ENCODE measurements at regions of chr18 and their contacts with region 1.

Region 1: GRCh38 chr18:864872-865273 is 39.8 kb upstream of the ADCYAP1 start:
- DNase-seq: peak; percentile 18 to 59 (median 46)
- ATAC-seq: peak; percentile 76
- H3K4me3 ChIP-seq: no peak overlapping the region
- H3K4me3 Mint-ChIP-seq: peak overlapping the region in 2 of 10 donors; percentile 11 to 23
- H3K27ac ChIP-seq: no peak overlapping the region
- H3K27ac Mint-ChIP-seq: no peak overlapping the region
- H3K4me1 ChIP-seq: no peaks in the 10 kb centered on the region
- H3K4me1 Mint-ChIP-seq: peaks cover 3 to 6% (median 4%) of the 10 kb centered on the region in 7 donors
- H3K27me3 ChIP-seq: peaks cover 0 to 5% of the 10 kb centered on the region in 2 donors
- H3K27me3 Mint-ChIP-seq: peaks cover 18 to 40% (median 20%) of the 10 kb centered on the region in 5 donors

Region 2: DNA sequence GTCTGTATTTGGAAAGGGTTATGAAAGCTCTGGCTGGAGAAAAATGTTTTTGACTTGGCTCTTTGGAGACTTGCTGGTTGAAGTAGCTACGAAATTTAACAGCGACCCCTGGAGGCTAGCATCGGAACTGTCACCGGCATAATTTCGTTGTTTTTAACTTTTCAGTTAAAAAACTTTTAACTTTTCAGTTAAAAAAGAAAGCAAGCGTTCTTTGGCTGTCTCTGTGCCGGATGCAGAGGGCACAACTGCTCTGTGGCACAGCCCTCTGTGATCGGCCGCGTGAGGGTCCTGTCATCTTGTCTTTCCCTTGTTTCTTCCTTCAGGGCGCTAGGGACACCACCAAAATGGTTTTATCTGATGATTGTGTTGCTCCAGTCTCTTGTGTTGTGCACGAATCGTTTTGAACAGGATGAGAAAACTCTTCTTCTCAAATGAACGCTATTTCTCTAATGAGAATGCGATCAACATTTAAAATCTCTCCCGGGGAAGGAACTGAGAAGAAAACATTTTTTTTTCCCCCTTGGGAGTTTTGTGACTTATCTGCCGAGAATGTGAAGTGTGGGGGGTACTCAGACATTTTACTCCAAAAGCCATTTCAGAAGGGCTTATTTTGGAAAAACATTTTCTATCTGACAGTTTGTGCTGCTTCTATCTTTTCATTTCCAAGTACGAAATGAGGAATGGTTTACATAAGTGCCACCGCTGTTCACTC is 96.9 kb after region 1 on chr18:
- CTCF ChIA-PET with region 1: interaction called, 5 read pairs
- POLR2A ChIA-PET with region 1: no interaction called
- intact Hi-C with region 1: loop called in 1 of 2 experiments (anchors 1 kb)
- DNase-seq: peak in 7 of 9 donors; percentile 11 to 50 (median 34)
- ATAC-seq: peak; percentile 27
- H3K4me3 ChIP-seq: peak overlapping the region; percentile 21
- H3K4me3 Mint-ChIP-seq: peak overlapping the region in 8 of 10 donors; percentile 3 to 63 (median 36)
- H3K27ac ChIP-seq: no peak overlapping the region
- H3K27ac Mint-ChIP-seq: no peak overlapping the region
- H3K4me1 ChIP-seq: peaks cover 0 to 3% of the 10 kb centered on the region in 2 donors
- H3K4me1 Mint-ChIP-seq: peaks cover 0 to 10% (median 6%) of the 10 kb centered on the region in 7 donors
- H3K27me3 ChIP-seq: no peaks in the 10 kb centered on the region
- H3K27me3 Mint-ChIP-seq: peaks cover 25 to 39% (median 29%) of the 10 kb centered on the region in 5 donors

Region 3: DNA sequence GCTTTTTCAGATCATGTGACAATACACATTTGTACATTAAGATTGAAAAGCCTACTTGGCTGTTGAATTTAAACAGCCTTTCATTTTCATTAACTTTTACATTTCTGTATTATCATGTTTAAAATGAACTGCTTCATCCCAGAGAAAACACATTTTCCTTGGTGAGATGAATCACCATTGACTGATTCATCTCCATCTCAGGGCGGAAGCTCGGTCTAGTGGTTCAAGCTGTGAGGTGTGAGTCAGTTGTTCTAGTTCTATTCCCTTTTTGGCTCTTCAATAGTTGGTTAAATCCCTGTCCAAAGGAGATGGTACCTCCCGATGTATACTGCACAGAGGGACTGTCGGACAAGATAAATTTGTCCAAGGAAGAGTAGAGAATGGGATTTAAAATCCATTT is 229.5 kb after region 1 on chr18:
- CTCF ChIA-PET with region 1: no interaction called
- POLR2A ChIA-PET with region 1: no interaction called
- intact Hi-C with region 1: no loop called
- DNase-seq: no peak
- ATAC-seq: no peak
- H3K4me3 ChIP-seq: no peak overlapping the region
- H3K4me3 Mint-ChIP-seq: no peak overlapping the region
- H3K27ac ChIP-seq: no peak overlapping the region
- H3K27ac Mint-ChIP-seq: no peak overlapping the region
- H3K4me1 ChIP-seq: no peaks in the 10 kb centered on the region
- H3K4me1 Mint-ChIP-seq: no peaks in the 10 kb centered on the region
- H3K27me3 ChIP-seq: no peaks in the 10 kb centered on the region
- H3K27me3 Mint-ChIP-seq: peaks cover 0 to 3% (median 0%) of the 10 kb centered on the region in 5 donors

Region 4: GRCh38 chr18:1585879-1586488 is 721.1 kb after region 1 on chr18:
- CTCF ChIA-PET with region 1: no interaction called
- POLR2A ChIA-PET with region 1: no interaction called
- intact Hi-C with region 1: loop called (anchors 5 to 10 kb)
- DNase-seq: peak in 1 of 9 donors; percentile 22
- ATAC-seq: peak; percentile 37
- H3K4me3 ChIP-seq: no peak overlapping the region
- H3K4me3 Mint-ChIP-seq: no peak overlapping the region
- H3K27ac ChIP-seq: no peak overlapping the region
- H3K27ac Mint-ChIP-seq: no peak overlapping the region
- H3K4me1 ChIP-seq: no peaks in the 10 kb centered on the region
- H3K4me1 Mint-ChIP-seq: no peaks in the 10 kb centered on the region
- H3K27me3 ChIP-seq: no peaks in the 10 kb centered on the region
- H3K27me3 Mint-ChIP-seq: peaks cover 2 to 31% (median 8%) of the 10 kb centered on the region in 5 donors

Region 5: GRCh38 chr18:1604751-1605150 is 739.9 kb after region 1 on chr18:
- CTCF ChIA-PET with region 1: no interaction called
- POLR2A ChIA-PET with region 1: no interaction called
- intact Hi-C with region 1: no loop called
- DNase-seq: no peak
- ATAC-seq: no peak
- H3K4me3 ChIP-seq: no peak overlapping the region
- H3K4me3 Mint-ChIP-seq: no peak overlapping the region
- H3K27ac ChIP-seq: no peak overlapping the region
- H3K27ac Mint-ChIP-seq: no peak overlapping the region
- H3K4me1 ChIP-seq: no peaks in the 10 kb centered on the region
- H3K4me1 Mint-ChIP-seq: no peaks in the 10 kb centered on the region
- H3K27me3 ChIP-seq: no peaks in the 10 kb centered on the region
- H3K27me3 Mint-ChIP-seq: peaks cover 0 to 6% (median 0%) of the 10 kb centered on the region in 5 donors

Region 6: GRCh38 chr18:1663879-1664705 is 799.2 kb after region 1 on chr18:
- CTCF ChIA-PET with region 1: no interaction called
- POLR2A ChIA-PET with region 1: no interaction called
- intact Hi-C with region 1: loop called in 1 of 2 experiments (anchors 2 kb)
- DNase-seq: peak in 2 of 9 donors; percentile 5 to 31
- ATAC-seq: no peak
- H3K4me3 ChIP-seq: no peak overlapping the region
- H3K4me3 Mint-ChIP-seq: no peak overlapping the region
- H3K27ac ChIP-seq: no peak overlapping the region
- H3K27ac Mint-ChIP-seq: no peak overlapping the region
- H3K4me1 ChIP-seq: no peaks in the 10 kb centered on the region
- H3K4me1 Mint-ChIP-seq: no peaks in the 10 kb centered on the region
- H3K27me3 ChIP-seq: no peaks in the 10 kb centered on the region
- H3K27me3 Mint-ChIP-seq: peaks cover 0 to 11% (median 0%) of the 10 kb centered on the region in 5 donors

Region 7: GRCh38 chr18:2104620-2105462 is 1240.0 kb after region 1 on chr18:
- CTCF ChIA-PET with region 1: no interaction called
- POLR2A ChIA-PET with region 1: no interaction called
- intact Hi-C with region 1: loop called in 1 of 2 experiments (anchors 10 kb)
- DNase-seq: peak in 7 of 9 donors; percentile 4 to 59 (median 9)
- ATAC-seq: peak; percentile 60
- H3K4me3 ChIP-seq: no peak overlapping the region
- H3K4me3 Mint-ChIP-seq: no peak overlapping the region
- H3K27ac ChIP-seq: no peak overlapping the region
- H3K27ac Mint-ChIP-seq: no peak overlapping the region
- H3K4me1 ChIP-seq: no peaks in the 10 kb centered on the region
- H3K4me1 Mint-ChIP-seq: peaks cover 0 to 2% (median 0%) of the 10 kb centered on the region in 7 donors
- H3K27me3 ChIP-seq: no peaks in the 10 kb centered on the region
- H3K27me3 Mint-ChIP-seq: peaks cover 2 to 24% (median 12%) of the 10 kb centered on the region in 5 donors

Region 8: GRCh38 chr18:2337552-2338141 is 1472.8 kb after region 1 on chr18:
- CTCF ChIA-PET with region 1: no interaction called
- POLR2A ChIA-PET with region 1: no interaction called
- intact Hi-C with region 1: loop called in 1 of 2 experiments (anchors 2 kb)
- DNase-seq: peak in 8 of 9 donors; percentile 1 to 35 (median 20)
- ATAC-seq: peak; percentile 71
- H3K4me3 ChIP-seq: no peak overlapping the region
- H3K4me3 Mint-ChIP-seq: no peak overlapping the region
- H3K27ac ChIP-seq: no peak overlapping the region
- H3K27ac Mint-ChIP-seq: no peak overlapping the region
- H3K4me1 ChIP-seq: no peaks in the 10 kb centered on the region
- H3K4me1 Mint-ChIP-seq: peaks cover 0 to 5% (median 0%) of the 10 kb centered on the region in 7 donors
- H3K27me3 ChIP-seq: peaks cover 0 to under 1% of the 10 kb centered on the region in 2 donors
- H3K27me3 Mint-ChIP-seq: peaks cover 14 to 36% (median 29%) of the 10 kb centered on the region in 5 donors